AG04450 (cell line): ENCODE measurements at regions of chr14 and their contacts with region 1.

Region 1: DNA sequence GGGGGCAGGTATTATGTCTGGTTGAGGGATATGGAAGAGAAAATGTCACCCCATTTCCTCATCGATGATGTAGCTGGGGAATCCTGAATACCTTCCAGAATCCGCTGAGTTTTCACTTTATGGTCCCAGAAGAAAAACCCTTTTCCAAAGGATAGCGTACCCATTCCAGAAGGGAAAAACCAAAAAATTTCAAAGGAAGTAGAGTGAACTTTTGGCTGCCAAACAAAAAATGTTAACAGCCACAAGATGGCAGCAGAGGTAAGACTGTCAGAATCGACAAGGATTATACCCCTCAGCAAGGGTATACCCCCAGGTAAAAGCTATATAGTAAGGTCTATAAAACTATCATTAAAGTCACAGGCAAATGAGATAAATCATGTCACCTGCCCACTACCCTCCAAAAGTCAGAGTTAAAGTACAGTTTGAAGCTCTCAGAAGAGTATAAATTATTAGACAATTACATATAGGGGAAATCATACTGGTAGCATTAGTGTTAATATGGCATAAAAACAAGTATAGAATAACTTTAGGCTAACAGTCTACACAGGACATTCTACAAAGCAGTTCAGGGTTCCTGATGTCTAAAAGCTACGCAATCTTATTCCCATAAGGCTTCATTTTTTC is 18.0 kb downstream of the ACIN1 start:
- DNase-seq: no peak
- H3K4me3 ChIP-seq: no peak overlapping the region
- H3K27ac ChIP-seq: no peak overlapping the region
- H3K27me3 ChIP-seq: no peaks in the 10 kb centered on the region
- CTCF ChIP-seq: peak; percentile 75

Region 2: DNA sequence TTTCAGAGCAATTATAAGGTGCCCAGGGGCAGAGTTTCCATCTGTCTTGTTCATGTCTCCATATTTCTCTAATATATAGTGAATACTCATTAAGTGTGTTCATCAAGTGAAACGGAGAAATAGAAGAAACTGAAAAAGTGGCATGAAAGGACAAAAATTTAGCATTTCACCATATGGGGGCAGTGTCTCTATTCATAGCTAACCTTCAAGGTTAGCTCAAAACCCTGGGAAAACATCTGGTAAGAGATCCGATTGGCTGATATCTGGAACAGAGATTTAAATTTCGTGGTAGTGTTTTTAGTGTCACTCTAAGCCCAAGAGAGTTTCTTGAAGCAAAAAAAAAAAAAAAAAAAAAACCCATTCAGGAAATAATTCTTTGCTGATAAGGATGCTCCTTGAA is 855.4 kb before region 1 on chr14:
- CTCF ChIA-PET with region 1: interaction called, 11 read pairs
- POLR2A ChIA-PET with region 1: no interaction called
- DNase-seq: no peak
- H3K4me3 ChIP-seq: no peak overlapping the region
- H3K27ac ChIP-seq: no peak overlapping the region
- H3K27me3 ChIP-seq: no peaks in the 10 kb centered on the region
- CTCF ChIP-seq: peak; percentile 59

Region 3: DNA sequence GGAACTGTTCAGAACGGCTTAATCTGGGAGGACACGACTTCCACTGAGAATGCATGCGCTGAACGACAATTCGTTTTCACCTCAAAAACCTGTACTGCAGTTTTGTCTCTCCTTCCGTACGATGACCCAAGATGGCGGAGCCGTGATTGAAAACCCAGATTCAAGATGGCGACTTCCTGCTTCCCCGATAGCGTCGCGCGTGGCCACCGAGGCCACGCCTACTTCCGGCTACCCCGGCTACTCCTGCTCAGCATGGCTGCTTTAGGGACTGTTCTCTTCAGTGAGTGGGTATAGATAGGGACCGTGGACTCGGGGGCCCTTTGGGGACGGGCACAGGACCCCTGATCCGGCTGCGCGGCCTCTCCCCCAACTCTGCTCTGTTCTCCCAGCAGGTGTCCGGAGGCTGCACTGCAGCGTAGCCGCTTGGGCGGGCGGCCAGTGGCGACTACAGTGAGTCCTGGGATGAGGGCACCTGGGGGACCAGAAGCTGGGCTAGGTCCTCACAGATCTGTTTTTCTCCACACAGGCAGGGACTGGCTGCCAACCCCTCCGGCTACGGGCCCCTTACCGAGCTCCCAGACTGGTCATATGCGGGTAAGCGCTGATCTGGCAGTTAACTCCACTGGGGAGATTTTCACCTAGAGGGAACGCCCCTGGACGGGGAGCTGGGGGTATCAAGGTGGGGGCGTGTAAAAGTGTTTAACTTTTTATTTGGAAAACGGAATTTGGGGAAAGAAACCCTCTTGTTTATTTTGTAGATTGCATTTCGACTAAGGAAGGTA is 247.0 kb before region 1 on chr14 and contains the start of gene MRPL52:
- CTCF ChIA-PET with region 1: no interaction called
- POLR2A ChIA-PET with region 1: no interaction called
- DNase-seq: peak; percentile 67
- H3K4me3 ChIP-seq: peak within 1 kb of the TSS; percentile 86
- H3K27ac ChIP-seq: peak within 1 kb of the TSS; percentile 52
- H3K27me3 ChIP-seq: no peaks in the 10 kb centered on the region
- CTCF ChIP-seq: peak; percentile 8; the same call in 1 of the 2 replicates
- polyA plus RNA-seq, gene MRPL52: 71.8 and 78.1 TPM in 2 replicates

Region 4: DNA sequence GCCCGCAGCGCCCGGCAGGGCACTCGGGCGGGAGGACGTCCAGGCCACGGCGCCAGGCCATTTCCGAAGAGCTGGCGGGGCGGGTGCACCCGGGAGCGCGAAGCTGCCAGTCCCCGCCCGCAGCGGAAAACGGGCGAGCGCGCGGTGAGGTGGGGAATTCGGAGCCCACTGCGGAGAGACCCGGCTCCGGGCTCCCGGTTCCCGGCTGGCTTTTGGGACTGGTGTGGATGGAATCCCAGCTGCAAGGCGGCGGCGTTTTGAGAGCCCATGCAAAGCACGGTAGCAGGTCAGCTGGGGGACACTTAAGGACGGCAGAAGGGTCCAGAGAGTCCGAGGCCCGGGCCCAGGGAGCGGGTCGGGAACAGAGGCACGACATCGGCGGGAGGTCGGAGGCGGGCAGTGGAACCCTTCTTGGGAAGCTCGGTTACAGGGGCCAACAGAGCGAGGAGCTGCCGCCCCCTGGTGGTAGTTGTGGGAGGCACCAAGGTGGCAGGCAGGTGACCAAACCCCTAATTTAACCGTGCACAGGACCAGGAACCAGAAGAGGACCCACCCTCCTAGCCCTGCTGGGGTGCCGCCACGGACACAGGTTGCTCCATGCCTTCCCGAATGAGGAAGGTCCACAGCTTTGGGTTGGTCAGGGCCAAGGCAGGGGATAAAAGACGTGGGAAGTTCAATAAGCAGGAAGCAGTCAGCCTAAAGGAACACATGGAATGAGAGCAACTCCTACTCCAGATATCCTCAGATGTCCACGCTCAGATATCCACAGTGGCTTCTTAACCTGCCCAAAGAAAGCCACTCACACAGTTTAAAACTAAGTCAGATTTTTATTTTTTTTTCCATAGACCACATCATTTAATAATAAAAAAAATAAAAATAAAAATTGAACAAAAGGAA is 18.9 kb before region 1 on chr14:
- CTCF ChIA-PET with region 1: interaction called, 31 read pairs
- POLR2A ChIA-PET with region 1: interaction called, 17 read pairs
- DNase-seq: peak; percentile 45
- H3K4me3 ChIP-seq: peak overlapping the region; percentile 61
- H3K27ac ChIP-seq: peak overlapping the region; percentile 52
- H3K27me3 ChIP-seq: no peaks in the 10 kb centered on the region
- CTCF ChIP-seq: peak; percentile 96

Region 5: DNA sequence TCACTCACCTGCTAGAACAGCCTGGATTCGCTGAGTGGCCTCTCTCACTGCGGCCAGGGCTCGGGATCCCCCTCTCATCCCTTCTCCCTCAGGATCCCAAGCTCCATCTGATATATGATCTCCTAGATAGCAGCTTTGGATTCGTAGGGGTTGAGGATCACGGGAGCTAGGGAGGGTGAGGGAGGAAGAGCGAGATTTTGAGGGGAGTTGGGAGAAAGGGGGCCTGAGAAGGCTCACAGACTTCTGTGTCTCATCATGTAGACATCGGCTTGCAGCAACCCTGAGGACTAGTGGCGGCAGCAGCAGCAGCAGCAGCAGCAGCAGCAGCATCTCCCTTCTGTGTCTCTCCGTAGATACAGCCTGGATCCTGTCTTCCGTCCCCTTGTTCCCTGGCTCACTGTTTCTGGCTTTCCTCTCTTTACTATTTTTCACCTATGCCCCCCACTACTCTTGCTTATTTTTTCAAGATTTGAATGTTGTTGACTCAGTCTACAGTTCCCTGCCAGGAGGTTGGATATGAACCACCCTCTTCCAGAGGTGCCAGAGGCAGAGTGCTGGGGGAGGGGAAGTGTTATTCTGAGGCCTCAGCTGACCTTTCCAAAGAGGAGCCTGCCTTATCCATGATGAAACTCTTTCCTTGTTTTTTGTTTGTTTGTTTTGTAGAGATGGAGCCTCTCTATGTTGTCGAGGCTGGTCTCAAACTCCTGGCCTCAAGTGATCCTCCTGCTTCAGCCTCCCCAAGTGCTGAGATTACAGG is 27.9 kb after region 1 on chr14 and contains the start of gene CIROP:
- CTCF ChIA-PET with region 1: interaction called, 91 read pairs
- POLR2A ChIA-PET with region 1: interaction called, 10 read pairs
- DNase-seq: no peak
- H3K4me3 ChIP-seq: peak within 1 kb of the TSS; percentile 1; the same call in 1 of the 2 replicates
- H3K27ac ChIP-seq: no peak within 1 kb of the TSS
- H3K27me3 ChIP-seq: no peaks in the 10 kb centered on the region
- CTCF ChIP-seq: no peak
- polyA plus RNA-seq, gene CIROP: 0.07 and 0.12 TPM in 2 replicates

Region 6: GRCh38 chr14:23186913-23187654 is 110.2 kb after region 1 on chr14:
- CTCF ChIA-PET with region 1: interaction called, 15 read pairs
- POLR2A ChIA-PET with region 1: no interaction called
- DNase-seq: peak; percentile 47
- H3K4me3 ChIP-seq: no peak overlapping the region
- H3K27ac ChIP-seq: no peak overlapping the region
- H3K27me3 ChIP-seq: peaks cover 24% of the 10 kb centered on the region
- CTCF ChIP-seq: peak; percentile 89